ENCODE measurements at regions of chr19 and their contacts with region 1.

Region 1: DNA sequence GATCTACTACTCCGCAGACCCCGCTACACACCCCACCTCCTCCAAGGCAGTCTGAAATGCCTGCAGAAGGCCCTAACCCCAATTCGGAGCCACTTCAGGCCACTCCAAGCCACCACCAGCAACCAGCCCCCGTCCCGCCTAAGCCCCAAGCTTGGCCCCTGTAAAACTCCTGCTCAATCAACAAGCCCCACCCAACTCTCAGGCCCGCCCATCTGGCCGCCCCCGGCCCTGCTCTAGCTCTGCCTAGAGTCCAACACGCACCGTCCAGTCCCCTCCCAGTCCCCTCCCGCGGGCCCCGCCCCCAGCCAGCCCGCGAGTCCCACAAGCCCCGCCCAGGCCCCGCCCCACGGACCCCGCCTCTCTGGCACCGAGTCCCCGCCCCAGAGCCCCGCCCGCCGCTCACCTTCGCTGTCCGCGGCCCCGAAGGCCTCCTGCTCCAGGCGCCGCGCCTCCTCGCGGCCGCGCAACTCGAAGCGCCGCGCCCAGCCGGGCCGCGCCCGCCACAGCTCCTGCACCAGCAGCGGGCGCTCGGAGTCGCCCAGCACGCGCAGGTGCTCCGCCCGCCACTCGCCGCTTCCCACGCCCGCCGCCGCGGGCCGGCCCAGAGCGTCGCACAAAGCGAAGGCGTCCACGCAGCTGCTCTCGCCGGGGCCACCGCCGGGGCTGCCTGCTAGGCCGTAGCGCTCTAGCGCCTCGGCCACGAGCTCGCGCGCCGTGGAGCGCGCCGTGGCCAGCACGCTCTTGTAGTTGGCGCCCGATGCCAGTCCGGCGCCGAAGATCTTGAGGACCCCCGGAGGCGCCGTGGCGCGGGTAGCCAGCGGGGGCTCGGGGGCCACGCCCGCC is 1.6 kb downstream of the RASIP1 start:
- DNase-seq: peak; percentile 98 to 99
- H3K4me3 ChIP-seq: peak overlapping the region; percentile 79
- H3K4me3 Mint-ChIP-seq: peak overlapping the region; percentile 59
- H3K27ac Mint-ChIP-seq: peak overlapping the region; percentile 77
- H3K4me1 ChIP-seq: peaks cover 22% of the 10 kb centered on the region
- H3K4me1 Mint-ChIP-seq: peaks cover 41% of the 10 kb centered on the region
- H3K27me3 ChIP-seq: no peaks in the 10 kb centered on the region
- H3K27me3 Mint-ChIP-seq: no peaks in the 10 kb centered on the region
- CTCF ChIP-seq: peak; percentile 30 to 35

Region 2: DNA sequence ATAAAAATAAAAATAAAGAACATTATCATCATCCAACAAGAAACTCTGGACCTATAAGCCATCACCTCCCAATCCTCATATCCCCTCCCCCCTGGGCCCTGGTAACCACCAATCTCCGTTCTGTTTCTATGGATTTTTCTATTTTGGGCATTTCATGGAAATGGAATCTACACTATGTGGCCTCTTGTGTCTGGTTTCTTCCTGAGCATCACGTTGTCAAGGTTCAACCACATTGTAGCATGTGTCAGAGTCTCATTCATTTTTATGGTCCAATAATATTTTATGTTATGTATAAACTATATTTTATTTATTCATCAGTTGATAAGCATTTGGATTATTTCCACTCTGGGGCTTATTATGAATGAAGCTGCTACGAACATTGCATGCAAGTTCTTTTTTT is 159.9 kb before region 1 on chr19:
- CTCF ChIA-PET with region 1: no interaction called
- POLR2A ChIA-PET with region 1: no interaction called
- intact Hi-C with region 1: no loop called
- DNase-seq: no peak
- H3K4me3 ChIP-seq: no peak overlapping the region
- H3K4me3 Mint-ChIP-seq: no peak overlapping the region
- H3K27ac Mint-ChIP-seq: no peak overlapping the region
- H3K4me1 ChIP-seq: peaks cover 10% of the 10 kb centered on the region
- H3K4me1 Mint-ChIP-seq: peaks cover 1% of the 10 kb centered on the region
- H3K27me3 ChIP-seq: no peaks in the 10 kb centered on the region
- H3K27me3 Mint-ChIP-seq: no peaks in the 10 kb centered on the region
- CTCF ChIP-seq: no peak

Region 3: GRCh38 chr19:48646001-48646721 is 92.6 kb before region 1 on chr19 and contains the start of gene CA11:
- CTCF ChIA-PET with region 1: interaction called, 28 read pairs
- POLR2A ChIA-PET with region 1: interaction called, 3 read pairs
- intact Hi-C with region 1: loop called (anchors 1 kb)
- DNase-seq: peak; percentile 94 to 95
- H3K4me3 ChIP-seq: peak within 1 kb of the TSS; percentile 56
- H3K4me3 Mint-ChIP-seq: peak within 1 kb of the TSS; percentile 77
- H3K27ac Mint-ChIP-seq: peak within 1 kb of the TSS; percentile 69
- H3K4me1 ChIP-seq: peaks cover 9% of the 10 kb centered on the region; the same call in 1 of the 2 replicates
- H3K4me1 Mint-ChIP-seq: peaks cover 16% of the 10 kb centered on the region
- H3K27me3 ChIP-seq: no peaks in the 10 kb centered on the region
- H3K27me3 Mint-ChIP-seq: no peaks in the 10 kb centered on the region
- CTCF ChIP-seq: peak; percentile 93 to 96
- total RNA-seq, gene CA11: 10.5 and 15.9 TPM in 2 replicates

Region 4: GRCh38 chr19:48674921-48675824 is 63.6 kb before region 1 on chr19:
- CTCF ChIA-PET with region 1: interaction called, 31 read pairs
- POLR2A ChIA-PET with region 1: interaction called, 5 read pairs
- intact Hi-C with region 1: loop called (anchors 1 kb)
- DNase-seq: peak; percentile 88 to 90
- H3K4me3 ChIP-seq: no peak overlapping the region
- H3K4me3 Mint-ChIP-seq: no peak overlapping the region
- H3K27ac Mint-ChIP-seq: peak overlapping the region; percentile 46
- H3K4me1 ChIP-seq: peaks cover 6% of the 10 kb centered on the region
- H3K4me1 Mint-ChIP-seq: peaks cover 13% of the 10 kb centered on the region
- H3K27me3 ChIP-seq: no peaks in the 10 kb centered on the region
- H3K27me3 Mint-ChIP-seq: no peaks in the 10 kb centered on the region
- CTCF ChIP-seq: peak; percentile 88 to 95

Region 5: GRCh38 chr19:48696353-48697010 is 42.3 kb before region 1 on chr19:
- CTCF ChIA-PET with region 1: interaction called, 11 read pairs
- POLR2A ChIA-PET with region 1: interaction called, 4 read pairs
- intact Hi-C with region 1: loop called (anchors 1 kb)
- DNase-seq: peak in 1 of 2 experiments; percentile 38
- H3K4me3 ChIP-seq: peak overlapping the region; percentile 72
- H3K4me3 Mint-ChIP-seq: peak overlapping the region; percentile 99
- H3K27ac Mint-ChIP-seq: peak overlapping the region; percentile 90
- H3K4me1 ChIP-seq: peaks cover 17% of the 10 kb centered on the region
- H3K4me1 Mint-ChIP-seq: peaks cover 7% of the 10 kb centered on the region
- H3K27me3 ChIP-seq: no peaks in the 10 kb centered on the region
- H3K27me3 Mint-ChIP-seq: no peaks in the 10 kb centered on the region
- CTCF ChIP-seq: no peak

Region 6: GRCh38 chr19:48713864-48714758 is 24.7 kb before region 1 on chr19:
- CTCF ChIA-PET with region 1: interaction called, 37 read pairs
- POLR2A ChIA-PET with region 1: interaction called, 8 read pairs
- intact Hi-C with region 1: loop called (anchors 1 kb)
- DNase-seq: peak; percentile 100
- H3K4me3 ChIP-seq: peak overlapping the region; percentile 75
- H3K4me3 Mint-ChIP-seq: peak overlapping the region; percentile 84
- H3K27ac Mint-ChIP-seq: peak overlapping the region; percentile 90
- H3K4me1 ChIP-seq: peaks cover 16% of the 10 kb centered on the region
- H3K4me1 Mint-ChIP-seq: peaks cover 33% of the 10 kb centered on the region
- H3K27me3 ChIP-seq: no peaks in the 10 kb centered on the region
- H3K27me3 Mint-ChIP-seq: no peaks in the 10 kb centered on the region
- CTCF ChIP-seq: no peak

Region 7: DNA sequence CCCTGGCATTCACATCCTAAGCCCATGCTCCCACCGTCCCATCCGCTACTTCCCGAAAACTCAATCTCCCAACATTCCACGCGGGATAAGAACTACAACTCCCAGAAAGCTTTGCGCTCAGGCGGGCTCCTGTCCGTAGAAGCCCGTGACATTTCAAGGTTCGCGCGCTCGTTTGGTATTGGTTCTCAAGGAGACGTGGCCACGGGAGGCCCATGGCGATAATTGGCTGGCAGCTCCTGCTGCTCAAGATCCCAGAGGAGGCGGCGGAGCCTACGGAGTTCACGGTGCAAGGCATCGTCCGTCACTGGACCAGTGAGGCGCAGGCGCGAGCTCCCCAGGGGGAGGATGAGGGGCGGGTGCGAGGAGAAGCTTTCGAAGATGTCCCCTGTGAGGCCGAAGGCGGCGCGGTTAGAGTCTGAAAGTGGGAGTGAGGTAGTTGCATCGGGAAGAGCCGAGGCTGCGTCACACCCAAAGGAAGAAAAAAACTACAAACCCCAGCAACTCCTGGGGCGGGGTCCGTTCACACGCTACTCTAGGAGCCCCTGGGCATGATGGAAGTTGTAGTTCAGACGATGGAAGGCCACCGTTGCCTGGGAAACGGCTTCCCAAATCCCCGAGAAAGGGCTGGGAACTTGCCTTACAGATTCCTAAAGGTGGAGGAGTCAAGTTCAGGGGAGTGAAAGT is 18.0 kb before region 1 on chr19:
- CTCF ChIA-PET with region 1: interaction called, 10 read pairs
- POLR2A ChIA-PET with region 1: interaction called, 5 read pairs
- intact Hi-C with region 1: loop called (anchors 1 kb)
- DNase-seq: peak; percentile 97 to 99
- H3K4me3 ChIP-seq: peak overlapping the region; percentile 79
- H3K4me3 Mint-ChIP-seq: peak overlapping the region; percentile 92
- H3K27ac Mint-ChIP-seq: peak overlapping the region; percentile 97
- H3K4me1 ChIP-seq: peaks cover 6% of the 10 kb centered on the region
- H3K4me1 Mint-ChIP-seq: peaks cover 26% of the 10 kb centered on the region
- H3K27me3 ChIP-seq: no peaks in the 10 kb centered on the region
- H3K27me3 Mint-ChIP-seq: no peaks in the 10 kb centered on the region
- CTCF ChIP-seq: no peak

Region 8: GRCh38 chr19:48752498-48753365 is 14.0 kb after region 1 on chr19 and contains the start of gene FUT1:
- CTCF ChIA-PET with region 1: no interaction called
- POLR2A ChIA-PET with region 1: no interaction called
- intact Hi-C with region 1: loop called (anchors 1 kb)
- DNase-seq: peak; percentile 97 to 99
- H3K4me3 ChIP-seq: peak within 1 kb of the TSS; percentile 39
- H3K4me3 Mint-ChIP-seq: peak within 1 kb of the TSS; percentile 89
- H3K27ac Mint-ChIP-seq: peak within 1 kb of the TSS; percentile 96
- H3K4me1 ChIP-seq: peaks cover 31% of the 10 kb centered on the region
- H3K4me1 Mint-ChIP-seq: peaks cover 33% of the 10 kb centered on the region
- H3K27me3 ChIP-seq: no peaks in the 10 kb centered on the region
- H3K27me3 Mint-ChIP-seq: no peaks in the 10 kb centered on the region
- CTCF ChIP-seq: peak; percentile 64 to 71
- total RNA-seq, gene FUT1: 26.1 and 30.5 TPM in 2 replicates

Region 9: DNA sequence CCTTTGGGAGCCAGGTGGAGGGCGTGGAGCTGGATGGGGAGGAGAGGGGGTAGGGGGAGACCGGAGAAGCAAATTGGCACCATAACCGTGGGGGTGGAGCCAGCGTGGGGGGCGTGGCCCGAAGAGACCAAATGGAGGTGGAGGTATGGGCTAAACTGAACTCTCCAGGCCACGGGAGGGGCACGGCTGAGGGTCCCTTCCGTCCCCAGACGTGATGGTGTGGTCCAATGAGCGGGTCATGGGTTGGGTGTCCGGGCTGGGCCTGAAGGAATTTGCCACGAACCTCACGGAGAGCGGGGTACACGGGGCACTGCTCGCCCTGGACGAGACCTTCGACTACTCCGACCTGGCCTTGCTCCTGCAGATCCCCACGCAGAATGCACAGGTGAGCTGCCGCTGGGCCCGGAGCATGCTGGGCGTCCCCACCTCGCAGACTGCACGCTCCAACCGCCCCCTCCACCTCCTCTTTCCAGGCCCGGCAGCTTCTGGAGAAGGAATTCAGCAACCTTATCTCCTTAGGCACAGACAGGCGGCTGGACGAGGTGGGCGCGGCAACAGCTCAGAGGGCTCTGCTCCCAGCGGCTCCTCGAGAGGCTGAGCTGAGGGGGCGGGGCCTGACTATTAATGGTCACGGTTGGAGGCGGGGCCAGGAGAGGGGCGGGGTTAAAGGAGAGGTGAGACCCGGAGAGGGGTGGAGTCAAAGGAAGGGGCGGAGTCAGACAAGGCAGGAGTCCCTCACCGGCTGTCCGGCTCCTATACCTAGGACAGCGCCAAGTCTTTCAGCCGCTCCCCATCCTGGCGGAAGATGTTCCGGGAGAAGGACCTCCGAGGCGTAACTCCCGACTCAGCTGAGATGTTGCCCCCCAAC is 410.2 kb after region 1 on chr19:
- CTCF ChIA-PET with region 1: no interaction called
- POLR2A ChIA-PET with region 1: no interaction called
- intact Hi-C with region 1: no loop called
- DNase-seq: peak; percentile 100
- H3K4me3 ChIP-seq: peak overlapping the region; percentile 69
- H3K4me3 Mint-ChIP-seq: peak overlapping the region; percentile 91
- H3K27ac Mint-ChIP-seq: peak overlapping the region; percentile 61
- H3K4me1 ChIP-seq: peaks cover 13% of the 10 kb centered on the region
- H3K4me1 Mint-ChIP-seq: peaks cover 30% of the 10 kb centered on the region
- H3K27me3 ChIP-seq: no peaks in the 10 kb centered on the region
- H3K27me3 Mint-ChIP-seq: no peaks in the 10 kb centered on the region
- CTCF ChIP-seq: no peak

Measured in Caco-2 (cell line).